Lower leg skin (tissue), 4 donors: ENCODE measurements at regions of chr16 and their contacts with region 1.

Region 1: DNA sequence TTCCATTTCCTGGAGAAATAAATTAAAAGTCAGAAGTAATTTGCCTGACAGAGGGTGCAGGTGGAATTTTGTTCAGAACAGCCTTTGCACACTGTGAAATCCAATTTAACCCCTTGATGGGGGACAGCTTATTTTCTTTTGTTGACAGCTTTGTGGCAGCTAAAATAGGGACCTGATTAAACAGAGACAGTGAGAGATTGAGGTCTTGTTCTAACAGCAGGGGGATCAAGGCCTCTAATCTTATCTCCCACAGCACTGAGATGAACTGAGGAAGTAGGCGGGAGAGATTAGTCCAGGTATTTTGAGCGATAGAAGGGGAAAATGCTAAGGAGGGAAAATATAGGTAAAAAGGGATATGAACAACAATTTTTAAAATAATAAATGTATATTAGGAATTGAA is 1491.4 kb upstream of the GOT2 start:
- DNase-seq: no peak
- H3K4me3 ChIP-seq: no peak overlapping the region
- CTCF ChIP-seq: no peak
- POLR2A ChIP-seq: no peak

Region 2: GRCh38 chr16:58222532-58223316 is 2002.8 kb before region 1 on chr16:
- intact Hi-C with region 1: loop called (anchors 10 kb)
- DNase-seq: no peak
- H3K4me3 ChIP-seq: no peak overlapping the region
- CTCF ChIP-seq: no peak
- POLR2A ChIP-seq: no peak